ENCODE measurements at regions of chr5 and their contacts with region 1.

Region 1: DNA sequence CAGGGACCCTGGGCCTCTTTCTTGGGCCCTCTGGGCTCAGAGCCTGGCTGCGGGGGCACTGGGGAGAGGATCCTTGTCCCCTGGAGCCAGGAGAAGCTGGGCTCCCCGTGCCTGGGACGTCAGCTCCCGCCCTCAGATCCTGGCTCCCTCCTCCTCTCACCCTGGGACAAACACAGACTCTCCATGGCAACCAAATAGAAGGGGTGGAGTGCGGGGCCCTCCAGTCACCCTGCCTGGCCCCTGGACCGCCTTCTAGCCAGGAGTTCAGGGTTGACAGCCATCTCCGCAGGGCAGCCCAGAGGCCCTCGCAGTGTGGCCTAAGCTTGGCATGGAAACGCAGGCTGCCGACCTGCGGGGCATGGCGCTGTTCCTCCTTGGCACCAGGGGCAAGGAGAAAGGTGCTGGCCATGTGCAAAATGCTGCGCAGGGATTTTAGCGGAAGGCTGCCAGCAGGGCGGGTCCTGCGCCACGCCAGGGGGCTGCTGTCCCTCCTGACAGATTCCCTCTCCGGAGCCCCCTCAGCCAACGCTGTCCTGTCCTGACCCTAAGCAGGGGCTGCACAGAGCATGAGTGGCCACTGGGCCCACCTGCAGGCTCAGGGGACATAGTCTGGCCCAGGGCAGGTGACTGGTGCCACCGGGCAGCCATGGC is 1.0 kb downstream of the ZDHHC11 start:
- DNase-seq: peak; percentile 51
- H3K4me3 ChIP-seq: peak overlapping the region in 2 of 4 donors; percentile 10 to 28
- H3K27ac ChIP-seq: no peak overlapping the region
- H3K4me1 ChIP-seq: peaks cover 0 to 10% (median 6%) of the 10 kb centered on the region in 4 donors
- H3K27me3 ChIP-seq: peaks cover 4 to 52% (median 34%) of the 10 kb centered on the region in 3 donors
- CTCF ChIP-seq: no peak
- EP300 ChIP-seq: no peak
- POLR2A ChIP-seq: no peak

Region 2: DNA sequence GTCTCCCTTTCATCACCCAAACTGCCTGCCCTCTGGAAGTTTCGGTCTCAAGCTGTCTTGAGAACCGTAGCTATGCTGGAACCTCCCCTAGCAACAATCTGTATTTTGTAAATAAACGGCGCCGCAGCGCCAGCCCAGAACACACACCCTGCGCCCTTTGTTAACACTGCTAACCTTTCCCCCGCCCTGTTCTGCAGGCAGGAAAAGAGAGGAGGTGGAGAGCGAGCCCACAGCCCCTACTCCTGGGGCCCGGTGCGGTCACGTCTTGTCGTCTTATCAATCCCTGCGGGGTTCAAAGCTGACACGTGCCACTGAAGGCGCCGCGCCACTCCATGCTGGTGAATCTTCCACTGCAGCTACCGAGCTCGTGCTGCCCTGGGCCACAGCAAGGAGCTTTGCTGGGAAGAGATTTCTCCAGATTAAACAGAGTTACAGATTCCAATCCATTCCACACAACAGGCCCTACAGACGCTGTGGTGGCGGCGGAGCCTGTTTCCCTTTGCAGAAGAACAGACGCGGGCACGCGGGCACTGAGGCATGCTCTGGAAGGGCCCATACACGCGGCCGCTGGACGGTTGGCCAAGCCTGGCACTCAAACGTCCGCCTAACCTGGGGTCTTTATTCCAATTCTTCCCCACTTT is 90.5 kb before region 1 on chr5:
- intact Hi-C with region 1: loop called (anchors 5 kb)
- DNase-seq: peak; percentile 77
- H3K4me3 ChIP-seq: peak overlapping the region in 2 of 4 donors; percentile 6 to 15
- H3K27ac ChIP-seq: peak overlapping the region; percentile 40 to 75 (median 54)
- H3K4me1 ChIP-seq: peaks cover 0 to 39% (median 33%) of the 10 kb centered on the region in 4 donors
- H3K27me3 ChIP-seq: no peaks in the 10 kb centered on the region
- CTCF ChIP-seq: no peak
- EP300 ChIP-seq: peak in 1 of 4 donors; percentile 25
- POLR2A ChIP-seq: no peak

Region 3: DNA sequence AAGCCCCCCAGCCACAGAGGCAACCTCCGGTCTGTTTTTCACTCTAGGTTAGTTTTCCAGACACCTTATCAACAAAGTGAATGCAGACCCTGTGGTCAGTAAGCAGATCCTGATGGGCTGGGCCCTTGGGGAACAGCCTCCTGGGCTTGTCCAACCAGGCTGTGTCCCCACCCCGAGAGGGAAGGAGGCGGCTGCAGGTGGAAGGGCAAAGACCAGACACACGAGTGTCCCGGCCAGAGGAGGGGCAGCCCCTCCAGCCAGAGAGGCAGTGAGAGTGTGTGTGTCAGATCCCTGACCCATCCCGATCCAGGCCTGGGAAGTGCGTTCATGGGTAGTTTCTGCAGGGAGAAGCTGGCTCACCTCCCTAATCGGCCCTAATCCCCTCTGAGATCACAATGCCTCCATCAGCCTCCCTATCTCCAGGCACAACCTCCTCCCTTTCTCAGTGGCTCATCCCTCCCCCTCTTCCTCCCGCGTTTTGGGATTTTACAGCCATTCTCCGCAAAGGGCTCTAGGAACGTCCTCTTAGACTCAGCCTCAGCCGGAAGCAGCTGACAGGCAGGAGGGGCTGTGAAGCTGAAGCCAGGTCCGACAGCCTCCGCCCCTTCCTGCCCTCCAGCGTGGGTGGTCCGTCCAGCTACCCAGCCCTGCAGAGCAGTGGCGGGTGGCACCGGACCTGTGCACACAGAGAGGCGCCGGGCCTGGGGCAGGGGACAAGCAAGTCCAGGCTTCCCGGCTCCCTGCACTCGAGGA is 252.4 kb after region 1 on chr5:
- intact Hi-C with region 1: no loop called
- DNase-seq: peak; percentile 77
- H3K4me3 ChIP-seq: no peak overlapping the region
- H3K27ac ChIP-seq: peak overlapping the region; percentile 1 to 77 (median 66)
- H3K4me1 ChIP-seq: peaks cover 0 to 84% (median 71%) of the 10 kb centered on the region in 4 donors
- H3K27me3 ChIP-seq: no peaks in the 10 kb centered on the region
- CTCF ChIP-seq: no peak
- EP300 ChIP-seq: no peak
- POLR2A ChIP-seq: no peak

Measured in sigmoid colon (tissue), 7 donors.